CD8-positive, alpha-beta T cell (primary cell): ENCODE measurements at regions of chr12 and their contacts with region 1.

Region 1: GRCh38 chr12:106841510-106842302 is 67.2 kb downstream of the RIC8B start:
- DNase-seq: peak in 8 of 9 experiments; percentile 3 to 62 (median 39)
- ATAC-seq: peak; percentile 46
- H3K4me3 ChIP-seq: no peak overlapping the region
- H3K4me3 Mint-ChIP-seq: no peak overlapping the region
- H3K27ac ChIP-seq: no peak overlapping the region
- H3K27ac Mint-ChIP-seq: no peak overlapping the region
- H3K4me1 ChIP-seq: peaks cover 5% of the 10 kb centered on the region
- H3K4me1 Mint-ChIP-seq: peaks cover 26% of the 10 kb centered on the region
- H3K27me3 ChIP-seq: no peaks in the 10 kb centered on the region
- H3K27me3 Mint-ChIP-seq: no peaks in the 10 kb centered on the region
- CTCF ChIP-seq: peak; percentile 65

Region 2: GRCh38 chr12:106417926-106418910 is 423.5 kb before region 1 on chr12:
- CTCF ChIA-PET with region 1: no interaction called
- POLR2A ChIA-PET with region 1: no interaction called
- intact Hi-C with region 1: no loop called
- DNase-seq: no peak
- ATAC-seq: no peak
- H3K4me3 ChIP-seq: no peak overlapping the region
- H3K4me3 Mint-ChIP-seq: no peak overlapping the region
- H3K27ac ChIP-seq: no peak overlapping the region
- H3K27ac Mint-ChIP-seq: no peak overlapping the region
- H3K4me1 ChIP-seq: no peaks in the 10 kb centered on the region
- H3K4me1 Mint-ChIP-seq: no peaks in the 10 kb centered on the region
- H3K27me3 ChIP-seq: no peaks in the 10 kb centered on the region
- H3K27me3 Mint-ChIP-seq: no peaks in the 10 kb centered on the region
- CTCF ChIP-seq: no peak

Region 3: GRCh38 chr12:106594447-106594846 is 247.3 kb before region 1 on chr12:
- CTCF ChIA-PET with region 1: interaction called, 3 read pairs
- POLR2A ChIA-PET with region 1: no interaction called
- intact Hi-C with region 1: loop called in 1 of 2 experiments (anchors 10 kb)
- DNase-seq: no peak
- ATAC-seq: no peak
- H3K4me3 ChIP-seq: no peak overlapping the region
- H3K4me3 Mint-ChIP-seq: no peak overlapping the region
- H3K27ac ChIP-seq: no peak overlapping the region
- H3K27ac Mint-ChIP-seq: no peak overlapping the region
- H3K4me1 ChIP-seq: no peaks in the 10 kb centered on the region
- H3K4me1 Mint-ChIP-seq: peaks cover 5% of the 10 kb centered on the region
- H3K27me3 ChIP-seq: peaks cover under 1 to 4% of the 10 kb centered on the region in 2 experiments
- H3K27me3 Mint-ChIP-seq: peaks cover 29% of the 10 kb centered on the region
- CTCF ChIP-seq: no peak

Region 4: DNA sequence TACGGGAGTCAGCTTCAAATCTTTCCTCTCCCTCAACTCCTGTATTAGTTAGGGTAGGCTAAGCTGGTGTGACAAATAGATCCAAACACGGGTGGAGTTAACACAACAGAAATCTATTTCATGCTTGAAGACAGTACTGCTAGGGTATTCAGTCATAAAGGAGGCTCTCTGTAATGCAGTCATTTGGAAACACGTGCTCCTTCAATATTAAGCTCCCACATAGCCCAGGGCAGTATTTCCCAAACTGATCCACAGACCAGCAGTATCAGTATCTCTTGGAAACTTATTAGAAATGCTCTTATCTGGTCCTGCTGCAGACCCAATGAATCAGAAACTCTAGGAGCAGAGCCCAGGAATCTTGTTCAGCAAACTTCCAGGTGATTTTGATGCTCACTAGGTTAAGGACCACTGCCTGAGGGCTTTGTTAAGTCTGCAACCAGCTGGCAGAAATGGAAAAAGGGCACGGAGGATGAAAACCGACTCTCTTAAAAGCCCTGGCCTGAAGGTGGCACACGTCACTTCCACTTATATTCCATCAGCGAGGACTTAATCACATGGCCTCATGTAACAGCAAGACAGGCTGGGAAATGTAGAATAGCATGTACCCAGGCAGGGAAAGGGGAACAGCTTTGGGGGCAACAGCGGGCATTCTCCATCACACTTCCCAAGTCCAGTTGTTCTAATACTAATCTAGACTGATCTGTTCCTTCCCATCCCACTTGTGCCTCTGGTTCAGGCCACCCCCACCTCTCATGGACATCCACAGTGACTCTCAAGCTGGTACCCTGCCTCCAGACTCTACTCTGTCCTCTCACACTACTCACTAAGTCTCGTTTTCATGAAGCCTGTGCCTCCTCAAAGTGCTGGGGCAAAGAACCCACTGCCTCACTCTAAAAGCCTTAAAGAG is 105.4 kb before region 1 on chr12:
- CTCF ChIA-PET with region 1: interaction called, 30 read pairs
- POLR2A ChIA-PET with region 1: no interaction called
- intact Hi-C with region 1: loop called (anchors 1 kb)
- DNase-seq: peak in 3 of 9 experiments; percentile 13 to 63 (median 51)
- ATAC-seq: peak; percentile 61
- H3K4me3 ChIP-seq: no peak overlapping the region
- H3K4me3 Mint-ChIP-seq: no peak overlapping the region
- H3K27ac ChIP-seq: no peak overlapping the region
- H3K27ac Mint-ChIP-seq: no peak overlapping the region
- H3K4me1 ChIP-seq: no peaks in the 10 kb centered on the region
- H3K4me1 Mint-ChIP-seq: peaks cover 7% of the 10 kb centered on the region
- H3K27me3 ChIP-seq: no peaks in the 10 kb centered on the region
- H3K27me3 Mint-ChIP-seq: no peaks in the 10 kb centered on the region
- CTCF ChIP-seq: no peak

Region 5: DNA sequence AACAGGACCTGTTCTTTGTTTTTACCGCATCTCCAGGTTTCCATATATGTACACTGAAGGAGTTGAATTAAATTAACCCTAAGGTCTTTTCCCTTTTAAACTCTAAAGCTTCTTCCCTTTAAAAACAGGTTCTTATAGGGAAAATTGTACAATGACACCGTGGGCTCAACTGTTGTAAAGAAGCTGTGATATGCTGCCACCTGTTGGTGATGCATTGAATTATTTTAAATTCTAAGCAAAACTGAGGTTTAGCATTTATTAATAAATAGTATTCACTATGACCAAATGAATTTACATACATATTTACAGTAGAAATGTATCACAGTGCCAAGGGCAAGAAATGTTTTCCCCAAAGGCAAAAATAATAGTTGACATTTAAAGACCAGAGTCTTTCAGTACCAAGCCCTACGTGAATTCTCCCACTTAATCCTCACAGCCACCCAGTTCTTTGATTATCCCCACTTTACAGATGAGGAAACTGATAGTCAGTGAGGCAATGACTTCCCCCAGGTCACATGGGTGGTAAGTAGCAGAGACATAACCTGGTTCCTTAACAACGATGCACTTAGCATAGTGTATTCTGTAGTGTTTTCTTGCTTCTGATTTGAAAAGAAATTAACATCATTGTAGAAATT is 78.3 kb after region 1 on chr12:
- CTCF ChIA-PET with region 1: interaction called, 3 read pairs
- POLR2A ChIA-PET with region 1: no interaction called
- intact Hi-C with region 1: loop called in 1 of 2 experiments (anchors 5 kb)
- DNase-seq: peak in 3 of 9 experiments; percentile 32 to 67 (median 58)
- ATAC-seq: no peak
- H3K4me3 ChIP-seq: no peak overlapping the region
- H3K4me3 Mint-ChIP-seq: no peak overlapping the region
- H3K27ac ChIP-seq: no peak overlapping the region
- H3K27ac Mint-ChIP-seq: no peak overlapping the region
- H3K4me1 ChIP-seq: peaks cover 7% of the 10 kb centered on the region
- H3K4me1 Mint-ChIP-seq: peaks cover 9% of the 10 kb centered on the region
- H3K27me3 ChIP-seq: no peaks in the 10 kb centered on the region
- H3K27me3 Mint-ChIP-seq: peaks cover 3% of the 10 kb centered on the region
- CTCF ChIP-seq: peak; percentile 95